ENCODE measurements at regions of chr1 and their contacts with region 1.

Region 1: DNA sequence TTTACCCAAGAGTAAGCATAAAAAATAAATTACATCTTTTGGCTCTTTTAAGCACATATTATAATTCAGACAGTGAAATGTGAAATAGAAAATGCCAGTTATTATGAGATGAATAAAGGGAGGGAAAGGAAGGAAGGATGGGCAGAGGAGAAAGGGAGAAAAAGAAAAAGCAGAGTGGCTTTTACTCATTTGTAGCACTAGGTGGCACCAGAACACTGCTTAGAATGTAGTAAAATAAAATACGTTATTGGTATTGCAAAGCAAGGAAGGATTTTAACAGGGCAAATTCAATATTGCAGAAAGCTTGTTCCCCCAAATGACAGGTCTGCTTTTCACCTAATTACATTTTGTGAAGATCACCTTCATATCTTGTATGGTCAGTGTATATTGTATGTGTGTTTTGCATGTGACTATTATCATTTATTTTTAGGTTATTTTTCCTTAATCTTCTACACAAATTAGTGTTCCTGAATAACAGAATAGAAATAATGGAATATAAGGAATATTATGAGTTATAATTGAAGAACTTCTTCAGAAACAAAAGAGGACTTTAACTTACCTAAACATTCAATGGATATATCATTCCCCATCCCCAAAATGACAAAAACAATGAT is 9.1 kb upstream of the PCNX2 start:
- DNase-seq: no peak
- H3K4me3 Mint-ChIP-seq: no peak overlapping the region
- H3K27ac Mint-ChIP-seq: no peak overlapping the region
- H3K4me1 Mint-ChIP-seq: no peaks in the 10 kb centered on the region
- H3K27me3 Mint-ChIP-seq: peaks cover 16% of the 10 kb centered on the region

Region 2: GRCh38 chr1:233112186-233113008 is 192.2 kb before region 1 on chr1:
- CTCF ChIA-PET with region 1: no interaction called
- DNase-seq: no peak
- H3K4me3 Mint-ChIP-seq: no peak overlapping the region
- H3K27ac Mint-ChIP-seq: peak overlapping the region; percentile 30
- H3K4me1 Mint-ChIP-seq: peaks cover 21% of the 10 kb centered on the region
- H3K27me3 Mint-ChIP-seq: no peaks in the 10 kb centered on the region

Region 3: GRCh38 chr1:234065794-234066447 is 761.3 kb after region 1 on chr1:
- CTCF ChIA-PET with region 1: interaction called, 13 read pairs
- DNase-seq: peak; percentile 72
- H3K4me3 Mint-ChIP-seq: no peak overlapping the region
- H3K27ac Mint-ChIP-seq: no peak overlapping the region
- H3K4me1 Mint-ChIP-seq: no peaks in the 10 kb centered on the region
- H3K27me3 Mint-ChIP-seq: peaks cover 14% of the 10 kb centered on the region

Measured in activated naive CD4-positive, alpha-beta T cell treated with anti-CD3 and anti-CD28 coated beads, Interleukin-2, amount 10 ng/mL, durations not matched to agents 7 days and 5 days (primary cell).